ENCODE measurements at regions of chr9 and their contacts with region 1.

Region 1: DNA sequence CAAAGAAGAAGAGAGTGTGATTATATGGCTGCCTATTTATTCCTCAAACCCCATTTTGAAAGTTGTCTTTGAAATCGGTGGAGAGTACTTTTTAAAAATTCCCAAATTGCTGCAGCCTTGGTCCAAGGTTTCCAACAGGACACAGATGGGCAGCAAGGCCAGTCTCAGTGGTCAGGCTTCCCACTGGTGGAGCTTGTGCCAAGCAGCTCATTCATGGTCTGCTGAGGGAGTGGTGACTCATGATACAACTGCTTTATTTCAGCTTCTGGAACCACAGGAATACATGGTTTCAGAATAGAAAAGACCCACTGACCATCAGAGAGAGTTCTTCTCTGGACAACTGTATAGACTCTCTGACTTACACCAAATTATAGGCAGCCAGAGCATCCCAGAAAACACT is 673.1 kb upstream of the KLF4 start:
- DNase-seq: no peak
- H3K4me3 ChIP-seq: no peak overlapping the region
- H3K4me3 Mint-ChIP-seq: no peak overlapping the region
- H3K27ac ChIP-seq: no peak overlapping the region
- H3K27ac Mint-ChIP-seq: no peak overlapping the region
- H3K4me1 ChIP-seq: peaks cover 9 to 13% of the 10 kb centered on the region in 2 donors
- H3K4me1 Mint-ChIP-seq: peaks cover 25% of the 10 kb centered on the region
- H3K27me3 ChIP-seq: no peaks in the 10 kb centered on the region
- H3K27me3 Mint-ChIP-seq: peaks cover 2 to 4% (median 4%) of the 10 kb centered on the region in 3 donors
- CTCF ChIP-seq: no peak

Region 2: GRCh38 chr9:108117795-108118194 is 44.9 kb before region 1 on chr9:
- intact Hi-C with region 1: no loop called
- DNase-seq: no peak
- H3K4me3 ChIP-seq: no peak overlapping the region
- H3K4me3 Mint-ChIP-seq: no peak overlapping the region
- H3K27ac ChIP-seq: no peak overlapping the region
- H3K27ac Mint-ChIP-seq: no peak overlapping the region
- H3K4me1 ChIP-seq: peaks cover 13 to 15% of the 10 kb centered on the region in 2 donors
- H3K4me1 Mint-ChIP-seq: peaks cover 12% of the 10 kb centered on the region
- H3K27me3 ChIP-seq: no peaks in the 10 kb centered on the region
- H3K27me3 Mint-ChIP-seq: peaks cover 0 to 6% (median 0%) of the 10 kb centered on the region in 3 donors
- CTCF ChIP-seq: no peak

Region 3: DNA sequence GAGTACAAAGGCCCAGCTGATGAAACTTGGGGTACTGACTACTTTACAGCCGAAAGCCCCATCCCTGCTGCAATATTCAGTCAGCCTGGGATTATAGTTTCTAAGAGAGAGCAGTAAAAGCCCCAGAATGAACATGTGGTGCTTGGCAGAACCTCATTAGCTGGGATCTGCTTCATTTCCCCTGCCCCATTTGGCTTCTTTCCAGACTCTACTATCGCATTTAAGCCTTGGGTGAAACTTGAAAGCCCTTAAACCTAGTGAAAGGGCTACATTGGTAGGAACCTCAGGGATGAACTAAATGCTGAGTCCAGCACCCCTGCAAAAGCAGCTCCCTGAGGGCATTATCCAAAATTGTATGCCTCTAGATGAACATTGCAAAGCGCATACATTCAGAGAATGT is 62.1 kb after region 1 on chr9:
- intact Hi-C with region 1: loop called in 1 of 2 experiments (anchors 5 kb)
- DNase-seq: no peak
- H3K4me3 ChIP-seq: no peak overlapping the region
- H3K4me3 Mint-ChIP-seq: no peak overlapping the region
- H3K27ac ChIP-seq: no peak overlapping the region
- H3K27ac Mint-ChIP-seq: no peak overlapping the region
- H3K4me1 ChIP-seq: peaks cover 7% of the 10 kb centered on the region in 2 donors
- H3K4me1 Mint-ChIP-seq: peaks cover 17% of the 10 kb centered on the region
- H3K27me3 ChIP-seq: no peaks in the 10 kb centered on the region
- H3K27me3 Mint-ChIP-seq: peaks cover 0 to 2% (median 1%) of the 10 kb centered on the region in 3 donors
- CTCF ChIP-seq: no peak

Measured in CD14-positive monocyte (primary cell).